Transverse colon (tissue), 4 donors: ENCODE measurements at regions of chr2 and their contacts with region 1.

Region 1: DNA sequence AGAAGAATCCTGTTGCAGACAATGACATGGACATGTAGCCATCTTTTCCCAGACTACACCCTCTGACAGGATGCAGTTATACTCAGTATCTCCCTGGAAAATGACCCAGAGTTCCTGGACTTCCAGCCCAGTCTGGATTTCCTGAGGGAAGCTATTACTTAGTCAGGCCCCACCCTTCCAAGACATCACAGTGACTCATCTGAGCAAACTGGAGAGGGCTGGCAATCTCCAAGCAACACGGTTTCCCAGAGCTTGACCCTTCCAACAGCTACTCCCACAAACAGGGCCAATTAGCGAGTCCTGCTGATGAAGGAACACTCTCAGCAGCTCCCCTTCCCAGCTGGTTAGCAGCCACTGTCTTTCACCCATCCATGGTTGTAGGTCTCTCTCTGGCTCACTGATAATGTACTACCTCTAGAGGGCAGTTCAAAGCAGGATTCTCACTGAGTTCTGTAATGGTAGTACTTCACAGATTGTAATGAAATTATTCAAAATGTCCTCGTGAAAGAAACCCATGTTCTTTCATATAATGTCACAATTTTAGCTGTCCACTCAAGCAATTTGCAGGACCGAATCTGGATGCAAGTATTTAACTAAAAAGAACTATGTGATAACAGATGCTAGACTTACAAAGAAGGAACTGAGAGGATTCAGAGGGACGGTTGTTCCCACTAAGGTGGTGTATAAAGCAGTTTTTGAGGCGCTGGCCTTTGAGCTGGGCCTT is 110.2 kb downstream of the MDH1 start:
- DNase-seq: peak; percentile 46
- H3K4me3 ChIP-seq: no peak overlapping the region
- H3K27ac ChIP-seq: peak overlapping the region; percentile 5 to 66 (median 53)
- H3K4me1 ChIP-seq: peaks cover 0 to 15% (median 2%) of the 10 kb centered on the region in 4 donors
- H3K27me3 ChIP-seq: no peaks in the 10 kb centered on the region
- CTCF ChIP-seq: peak in 4 of 5 experiments; percentile 40 to 56 (median 46)
- EP300 ChIP-seq: no peak
- POLR2A ChIP-seq: no peak

Region 2: GRCh38 chr2:63849381-63850203 is 150.6 kb after region 1 on chr2:
- in situ Hi-C with region 1: loop called in 2 of 4 experiments (anchors 10 to 25 kb)
- intact Hi-C with region 1: no loop called
- DNase-seq: no peak
- H3K4me3 ChIP-seq: no peak overlapping the region
- H3K27ac ChIP-seq: no peak overlapping the region
- H3K4me1 ChIP-seq: peaks cover 16 to 88% (median 59%) of the 10 kb centered on the region in 4 donors
- H3K27me3 ChIP-seq: no peaks in the 10 kb centered on the region
- CTCF ChIP-seq: no peak
- EP300 ChIP-seq: no peak
- POLR2A ChIP-seq: no peak

Region 3: GRCh38 chr2:63861220-63861822 is 162.3 kb after region 1 on chr2:
- in situ Hi-C with region 1: loop called in 3 of 4 experiments (anchors 10 to 25 kb)
- intact Hi-C with region 1: no loop called
- DNase-seq: peak; percentile 56
- H3K4me3 ChIP-seq: no peak overlapping the region
- H3K27ac ChIP-seq: peak overlapping the region in 3 of 4 donors; percentile 13 to 67 (median 45)
- H3K4me1 ChIP-seq: peaks cover 5 to 43% (median 18%) of the 10 kb centered on the region in 4 donors
- H3K27me3 ChIP-seq: no peaks in the 10 kb centered on the region
- CTCF ChIP-seq: peak; percentile 50 to 66 (median 63)
- EP300 ChIP-seq: no peak
- POLR2A ChIP-seq: no peak

Region 4: GRCh38 chr2:63888490-63889402 is 189.8 kb after region 1 on chr2:
- in situ Hi-C with region 1: loop called in 1 of 4 experiments (anchors 10 kb)
- intact Hi-C with region 1: no loop called
- DNase-seq: peak; percentile 32
- H3K4me3 ChIP-seq: no peak overlapping the region
- H3K27ac ChIP-seq: no peak overlapping the region
- H3K4me1 ChIP-seq: no peaks in the 10 kb centered on the region
- H3K27me3 ChIP-seq: no peaks in the 10 kb centered on the region
- CTCF ChIP-seq: peak; percentile 59 to 68 (median 64)
- EP300 ChIP-seq: no peak
- POLR2A ChIP-seq: no peak